Testis (tissue), 5 donors: ENCODE measurements at regions of chr17 and their contacts with region 1.

Region 1: DNA sequence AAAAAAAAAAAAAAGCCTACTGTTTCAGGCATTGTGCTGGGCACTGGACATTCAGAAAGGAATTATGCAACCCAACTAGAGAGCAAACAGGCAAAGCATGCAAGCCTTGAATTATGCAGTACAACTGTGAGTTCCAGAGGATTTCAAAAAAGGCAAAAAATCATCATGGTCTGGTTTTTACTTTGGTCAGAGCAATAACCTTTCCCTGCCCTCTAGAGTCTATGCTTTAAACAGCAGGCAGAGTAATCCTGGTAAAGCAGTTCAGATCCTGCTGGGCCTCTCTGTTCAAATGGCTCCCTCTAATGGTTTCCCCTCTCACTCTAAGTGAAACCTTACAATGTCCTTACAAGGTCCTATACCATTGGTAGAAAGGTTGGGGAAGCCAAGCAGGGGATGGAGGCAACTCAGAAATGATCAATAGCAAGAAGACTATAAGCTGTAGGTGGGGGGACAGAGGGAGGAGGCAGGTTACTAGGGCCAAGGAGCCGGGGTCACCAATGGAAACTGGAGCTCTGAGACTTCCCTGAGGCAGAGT is 4.6 kb upstream of the TAF15 start:
- DNase-seq: peak; percentile 69
- H3K4me3 ChIP-seq: no peak overlapping the region
- H3K27ac ChIP-seq: no peak overlapping the region
- H3K4me1 ChIP-seq: peaks cover 16% of the 10 kb centered on the region
- H3K27me3 ChIP-seq: no peaks in the 10 kb centered on the region
- CTCF ChIP-seq: peak; percentile 82 to 91 (median 89)
- POLR2A ChIP-seq: no peak

Region 2: DNA sequence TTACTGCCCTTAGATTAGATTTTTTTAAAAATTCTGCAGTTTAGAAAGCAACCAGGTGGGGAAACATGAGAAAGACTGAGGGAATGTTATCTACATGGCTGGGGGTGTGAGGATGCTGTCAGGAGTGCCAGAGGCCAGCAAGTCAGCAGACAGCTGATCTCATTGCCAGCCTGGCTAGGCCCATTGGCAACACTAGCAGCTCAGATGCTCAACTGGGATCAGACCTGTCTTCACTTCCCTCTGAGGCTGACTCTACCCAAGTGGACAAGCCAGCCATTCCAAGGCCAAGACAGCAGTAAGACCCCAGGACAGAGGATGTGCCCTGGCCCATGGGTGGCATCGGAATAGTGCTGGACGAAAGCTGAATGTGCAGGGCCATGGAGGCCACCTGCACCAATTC is 1129.1 kb before region 1 on chr17:
- intact Hi-C with region 1: no loop called
- DNase-seq: no peak
- H3K4me3 ChIP-seq: no peak overlapping the region
- H3K27ac ChIP-seq: no peak overlapping the region
- H3K4me1 ChIP-seq: no peaks in the 10 kb centered on the region
- H3K27me3 ChIP-seq: no peaks in the 10 kb centered on the region
- CTCF ChIP-seq: no peak
- POLR2A ChIP-seq: no peak

Region 3: GRCh38 chr17:35766903-35767510 is 37.7 kb before region 1 on chr17:
- intact Hi-C with region 1: loop called (anchors 5 kb)
- DNase-seq: no peak
- H3K4me3 ChIP-seq: no peak overlapping the region
- H3K27ac ChIP-seq: peak overlapping the region in 1 of 2 donors; percentile 3
- H3K4me1 ChIP-seq: peaks cover 25% of the 10 kb centered on the region
- H3K27me3 ChIP-seq: no peaks in the 10 kb centered on the region
- CTCF ChIP-seq: peak; percentile 33 to 35 (median 34)
- POLR2A ChIP-seq: no peak